Endothelial cell of umbilical vein (primary cell): ENCODE measurements at regions of chr15 and their contacts with region 1.

Region 1: DNA sequence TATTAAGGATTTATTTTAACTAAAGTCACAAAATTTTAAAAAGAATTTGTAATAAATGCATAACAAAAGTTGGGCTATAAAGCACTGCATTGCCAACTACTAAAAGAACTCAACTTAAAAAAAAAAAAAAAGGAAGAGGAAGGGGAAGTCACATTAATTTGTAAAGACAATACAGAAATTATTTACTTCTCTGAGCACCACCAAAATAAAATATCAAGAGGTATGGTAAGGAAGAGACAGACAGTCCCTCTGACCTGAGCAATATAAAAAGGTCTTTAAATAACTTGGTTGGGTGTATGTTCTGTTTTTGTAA is 83.5 kb downstream of the UACA start:
- DNase-seq: no peak
- H3K4me3 ChIP-seq: no peak overlapping the region
- H3K27ac ChIP-seq: no peak overlapping the region
- H3K4me1 ChIP-seq: peaks cover 12% of the 10 kb centered on the region
- H3K27me3 ChIP-seq: no peaks in the 10 kb centered on the region
- CTCF ChIP-seq: no peak
- POLR2A ChIP-seq: no peak

Region 2: GRCh38 chr15:70713714-70714414 is 34.0 kb after region 1 on chr15:
- CTCF ChIA-PET with region 1: interaction called, 30 read pairs
- POLR2A ChIA-PET with region 1: no interaction called
- dilution Hi-C with region 1: no loop called
- intact Hi-C with region 1: no loop called
- DNase-seq: peak; percentile 56
- H3K4me3 ChIP-seq: peak overlapping the region in 1 of 3 experiments; percentile 36
- H3K27ac ChIP-seq: peak overlapping the region; percentile 74
- H3K4me1 ChIP-seq: peaks cover 55% of the 10 kb centered on the region
- H3K27me3 ChIP-seq: no peaks in the 10 kb centered on the region
- CTCF ChIP-seq: no peak
- POLR2A ChIP-seq: no peak

Region 3: DNA sequence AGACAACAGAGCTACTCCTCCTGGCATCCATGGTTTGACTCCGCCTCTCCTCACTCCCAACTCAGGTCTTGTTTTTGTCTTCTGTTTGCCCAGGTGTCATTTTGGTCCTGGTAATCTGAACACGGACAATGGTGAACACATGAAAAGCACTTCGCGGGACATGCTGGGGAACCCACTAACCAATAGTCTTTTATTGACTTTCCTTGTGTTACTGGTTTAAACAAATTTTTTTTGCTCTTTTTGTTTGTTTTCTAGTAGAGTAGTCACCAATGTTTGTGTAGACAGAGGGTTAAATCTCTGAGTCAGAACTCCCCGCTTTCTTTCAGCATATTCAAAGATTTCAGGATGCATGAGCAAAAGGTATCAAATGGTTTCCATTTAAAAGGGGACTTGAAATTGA is 135.8 kb after region 1 on chr15:
- CTCF ChIA-PET with region 1: interaction called, 118 read pairs
- POLR2A ChIA-PET with region 1: interaction called, 3 read pairs
- dilution Hi-C with region 1: no loop called
- intact Hi-C with region 1: loop called (anchors 1 kb)
- DNase-seq: no peak
- H3K4me3 ChIP-seq: no peak overlapping the region
- H3K27ac ChIP-seq: no peak overlapping the region
- H3K4me1 ChIP-seq: peaks cover 9% of the 10 kb centered on the region
- H3K27me3 ChIP-seq: no peaks in the 10 kb centered on the region
- CTCF ChIP-seq: no peak
- POLR2A ChIP-seq: no peak